ENCODE measurements at regions of chr4 and their contacts with region 1.

Region 1: GRCh38 chr4:98643755-98644154 is 14.7 kb downstream of the TSPAN5 start:
- H3K4me3 Mint-ChIP-seq: no peak overlapping the region
- H3K27ac Mint-ChIP-seq: no peak overlapping the region
- H3K4me1 Mint-ChIP-seq: no peaks in the 10 kb centered on the region
- H3K27me3 Mint-ChIP-seq: no peaks in the 10 kb centered on the region

Region 2: GRCh38 chr4:98663226-98664006 is 19.7 kb after region 1 on chr4:
- intact Hi-C with region 1: loop called (anchors 1 kb)
- H3K4me3 Mint-ChIP-seq: peak overlapping the region; percentile 55
- H3K27ac Mint-ChIP-seq: peak overlapping the region; percentile 71
- H3K4me1 Mint-ChIP-seq: peaks cover 29% of the 10 kb centered on the region
- H3K27me3 Mint-ChIP-seq: peaks cover 29% of the 10 kb centered on the region

Region 3: DNA sequence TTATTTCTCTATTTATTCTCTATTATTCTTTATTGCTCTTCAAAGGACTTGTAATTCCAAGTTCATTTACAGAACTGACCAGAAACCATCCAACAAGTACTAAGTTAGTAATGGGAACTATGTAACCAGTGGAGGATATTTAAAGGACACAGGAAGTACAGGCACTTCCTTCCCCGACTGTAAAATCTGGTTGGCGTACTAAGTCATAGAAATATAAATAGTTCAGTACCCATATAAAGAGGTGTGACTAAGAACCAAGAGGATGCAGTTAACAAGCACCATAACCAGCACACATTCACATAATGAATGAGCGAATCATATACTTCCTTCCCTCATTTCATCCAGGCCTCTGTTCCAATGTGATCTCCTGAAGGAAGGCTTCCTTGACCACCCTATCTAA is 288.8 kb after region 1 on chr4:
- intact Hi-C with region 1: no loop called
- H3K4me3 Mint-ChIP-seq: no peak overlapping the region
- H3K27ac Mint-ChIP-seq: no peak overlapping the region
- H3K4me1 Mint-ChIP-seq: peaks cover 32% of the 10 kb centered on the region
- H3K27me3 Mint-ChIP-seq: no peaks in the 10 kb centered on the region